ENCODE measurements at regions of chr2 and their contacts with region 1.

Region 1: DNA sequence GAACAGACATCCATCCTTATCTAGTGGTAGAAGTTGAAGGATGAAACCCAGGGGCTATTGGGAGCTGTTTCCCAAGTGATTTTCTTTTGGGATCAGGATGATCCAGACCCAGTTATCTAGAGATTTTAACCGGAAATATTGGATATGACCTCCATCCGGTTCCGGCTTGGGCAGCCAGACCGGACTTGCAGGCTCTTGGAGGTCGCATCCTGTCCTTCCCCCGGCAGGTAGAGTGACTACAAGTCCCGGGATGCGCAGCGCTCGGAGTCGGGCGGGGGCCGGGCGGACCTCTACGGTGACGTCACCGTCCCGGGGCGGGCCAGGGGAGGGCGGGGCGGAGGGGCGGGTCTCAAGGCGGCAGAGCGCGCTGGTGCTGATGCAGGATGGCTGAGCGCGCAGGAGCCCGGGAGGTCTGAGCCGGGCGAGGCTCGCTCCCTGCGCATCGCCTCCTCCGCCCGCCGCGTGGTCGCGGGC is at the start of gene KIF5C:
- DNase-seq: peak; percentile 78 to 83 (median 81)
- H3K4me3 ChIP-seq: peak within 1 kb of the TSS; percentile 54 to 70
- H3K4me3 Mint-ChIP-seq: peak within 1 kb of the TSS; percentile 90 to 97 (median 92)
- H3K27ac ChIP-seq: peak within 1 kb of the TSS; percentile 47
- H3K27ac Mint-ChIP-seq: peak within 1 kb of the TSS; percentile 78 to 97 (median 92)
- H3K4me1 ChIP-seq: peaks cover 8% of the 10 kb centered on the region
- H3K4me1 Mint-ChIP-seq: peaks cover 6 to 20% (median 15%) of the 10 kb centered on the region in 4 donors
- H3K27me3 ChIP-seq: no peaks in the 10 kb centered on the region
- H3K27me3 Mint-ChIP-seq: peaks cover 6 to 10% of the 10 kb centered on the region in 2 donors
- total RNA-seq, gene KIF5C: 21.1 to 21.3 TPM

Region 2: GRCh38 chr2:148273158-148273691 is 601.7 kb before region 1 on chr2:
- CTCF ChIA-PET with region 1: no interaction called
- POLR2A ChIA-PET with region 1: no interaction called
- intact Hi-C with region 1: no loop called
- DNase-seq: no peak
- H3K4me3 ChIP-seq: no peak overlapping the region
- H3K4me3 Mint-ChIP-seq: no peak overlapping the region
- H3K27ac ChIP-seq: no peak overlapping the region
- H3K27ac Mint-ChIP-seq: peak overlapping the region in 2 of 7 donors; percentile 2 to 10
- H3K4me1 ChIP-seq: no peaks in the 10 kb centered on the region
- H3K4me1 Mint-ChIP-seq: no peaks in the 10 kb centered on the region
- H3K27me3 ChIP-seq: no peaks in the 10 kb centered on the region
- H3K27me3 Mint-ChIP-seq: no peaks in the 10 kb centered on the region

Region 3: GRCh38 chr2:148524519-148524919 is 350.4 kb before region 1 on chr2:
- CTCF ChIA-PET with region 1: no interaction called
- POLR2A ChIA-PET with region 1: no interaction called
- intact Hi-C with region 1: loop called (anchors 1 kb)
- DNase-seq: peak; percentile 79 to 90 (median 87)
- H3K4me3 ChIP-seq: peak overlapping the region in 1 of 2 donors; percentile 26
- H3K4me3 Mint-ChIP-seq: peak overlapping the region; percentile 22 to 89 (median 72)
- H3K27ac ChIP-seq: peak overlapping the region; percentile 60
- H3K27ac Mint-ChIP-seq: peak overlapping the region; percentile 85 to 99 (median 95)
- H3K4me1 ChIP-seq: peaks cover 92% of the 10 kb centered on the region
- H3K4me1 Mint-ChIP-seq: peaks cover 74 to 90% (median 84%) of the 10 kb centered on the region in 4 donors
- H3K27me3 ChIP-seq: no peaks in the 10 kb centered on the region
- H3K27me3 Mint-ChIP-seq: no peaks in the 10 kb centered on the region

Region 4: GRCh38 chr2:148813603-148814065 is 61.3 kb before region 1 on chr2:
- CTCF ChIA-PET with region 1: no interaction called
- POLR2A ChIA-PET with region 1: no interaction called
- intact Hi-C with region 1: loop called (anchors 10 kb)
- DNase-seq: peak; percentile 54 to 85 (median 63)
- H3K4me3 ChIP-seq: no peak overlapping the region
- H3K4me3 Mint-ChIP-seq: peak overlapping the region; percentile 26 to 78 (median 64)
- H3K27ac ChIP-seq: no peak overlapping the region
- H3K27ac Mint-ChIP-seq: peak overlapping the region; percentile 17 to 80 (median 67)
- H3K4me1 ChIP-seq: peaks cover 15% of the 10 kb centered on the region
- H3K4me1 Mint-ChIP-seq: peaks cover 14 to 25% (median 19%) of the 10 kb centered on the region in 4 donors
- H3K27me3 ChIP-seq: no peaks in the 10 kb centered on the region
- H3K27me3 Mint-ChIP-seq: peaks cover under 1 to 5% of the 10 kb centered on the region in 2 donors

Region 5: DNA sequence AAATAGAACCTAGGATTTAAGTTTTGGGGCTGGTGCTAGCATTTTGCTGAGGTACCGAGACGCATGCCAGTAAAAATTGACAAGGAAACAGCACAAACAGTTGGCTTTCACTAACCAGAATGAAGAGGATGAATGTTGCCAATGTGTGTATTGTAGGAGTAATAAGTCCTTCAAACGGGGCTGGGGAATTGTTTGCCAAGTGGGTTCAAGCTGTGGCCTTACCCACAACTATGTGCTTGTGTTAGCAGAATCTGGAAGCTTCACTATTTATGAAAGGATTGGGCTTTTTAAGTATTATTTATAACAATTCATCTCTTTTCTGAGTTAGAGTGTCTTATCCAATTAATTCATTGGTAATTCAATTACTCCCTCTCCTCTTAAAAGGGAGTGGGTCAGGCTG is 14.9 kb before region 1 on chr2:
- CTCF ChIA-PET with region 1: no interaction called
- POLR2A ChIA-PET with region 1: no interaction called
- intact Hi-C with region 1: no loop called
- DNase-seq: no peak
- H3K4me3 ChIP-seq: no peak overlapping the region
- H3K4me3 Mint-ChIP-seq: no peak overlapping the region
- H3K27ac ChIP-seq: no peak overlapping the region
- H3K27ac Mint-ChIP-seq: no peak overlapping the region
- H3K4me1 ChIP-seq: no peaks in the 10 kb centered on the region
- H3K4me1 Mint-ChIP-seq: peaks cover 0 to 2% (median 0%) of the 10 kb centered on the region in 4 donors
- H3K27me3 ChIP-seq: peaks cover 4% of the 10 kb centered on the region
- H3K27me3 Mint-ChIP-seq: peaks cover 6 to 8% of the 10 kb centered on the region in 2 donors

Region 6: DNA sequence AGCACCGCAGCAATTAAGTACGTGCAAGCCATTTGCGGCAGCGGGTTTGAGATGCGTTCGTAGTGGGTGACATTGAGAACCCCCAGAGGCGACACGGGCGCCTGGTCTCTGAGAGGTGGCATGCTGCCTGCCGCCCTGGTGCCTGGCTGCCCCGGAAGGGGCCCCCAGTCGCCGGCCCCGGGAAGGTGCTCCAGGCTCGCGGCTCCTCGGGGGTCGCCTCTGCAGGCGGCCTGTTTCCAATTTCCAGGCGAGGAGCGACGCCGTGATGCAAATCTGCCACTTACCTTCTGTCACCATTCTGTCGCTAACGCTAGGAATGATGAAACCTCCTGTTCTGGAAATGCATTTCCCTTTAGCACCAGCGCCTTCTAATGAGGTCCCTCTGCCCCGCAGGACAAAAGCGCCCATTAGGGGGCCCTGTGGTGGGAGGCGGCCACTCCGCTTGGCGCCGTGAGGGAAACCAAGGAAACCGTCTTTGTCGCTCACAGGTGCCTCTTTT is 13.1 kb after region 1 on chr2:
- CTCF ChIA-PET with region 1: no interaction called
- POLR2A ChIA-PET with region 1: no interaction called
- intact Hi-C with region 1: loop called (anchors 1 kb)
- DNase-seq: peak in 2 of 5 donors; percentile 6 to 8
- H3K4me3 ChIP-seq: peak overlapping the region in 1 of 2 donors; percentile 17
- H3K4me3 Mint-ChIP-seq: peak overlapping the region; percentile 83 to 90 (median 86)
- H3K27ac ChIP-seq: no peak overlapping the region
- H3K27ac Mint-ChIP-seq: peak overlapping the region in 4 of 7 donors; percentile 4 to 77 (median 14)
- H3K4me1 ChIP-seq: peaks cover 16% of the 10 kb centered on the region
- H3K4me1 Mint-ChIP-seq: peaks cover 6 to 17% (median 10%) of the 10 kb centered on the region in 4 donors
- H3K27me3 ChIP-seq: peaks cover 4% of the 10 kb centered on the region
- H3K27me3 Mint-ChIP-seq: peaks cover 2 to 8% of the 10 kb centered on the region in 2 donors

Region 7: GRCh38 chr2:148926291-148926961 is 51.5 kb after region 1 on chr2:
- CTCF ChIA-PET with region 1: interaction called, 5 read pairs
- POLR2A ChIA-PET with region 1: interaction called, 3 read pairs
- intact Hi-C with region 1: loop called (anchors 1 kb)
- DNase-seq: peak; percentile 43 to 59 (median 56)
- H3K4me3 ChIP-seq: peak overlapping the region in 1 of 2 donors; percentile 39
- H3K4me3 Mint-ChIP-seq: peak overlapping the region; percentile 84 to 95 (median 88)
- H3K27ac ChIP-seq: peak overlapping the region; percentile 25
- H3K27ac Mint-ChIP-seq: peak overlapping the region; percentile 72 to 94 (median 93)
- H3K4me1 ChIP-seq: peaks cover 20% of the 10 kb centered on the region
- H3K4me1 Mint-ChIP-seq: peaks cover 16 to 30% (median 21%) of the 10 kb centered on the region in 4 donors
- H3K27me3 ChIP-seq: no peaks in the 10 kb centered on the region
- H3K27me3 Mint-ChIP-seq: no peaks in the 10 kb centered on the region

Region 8: DNA sequence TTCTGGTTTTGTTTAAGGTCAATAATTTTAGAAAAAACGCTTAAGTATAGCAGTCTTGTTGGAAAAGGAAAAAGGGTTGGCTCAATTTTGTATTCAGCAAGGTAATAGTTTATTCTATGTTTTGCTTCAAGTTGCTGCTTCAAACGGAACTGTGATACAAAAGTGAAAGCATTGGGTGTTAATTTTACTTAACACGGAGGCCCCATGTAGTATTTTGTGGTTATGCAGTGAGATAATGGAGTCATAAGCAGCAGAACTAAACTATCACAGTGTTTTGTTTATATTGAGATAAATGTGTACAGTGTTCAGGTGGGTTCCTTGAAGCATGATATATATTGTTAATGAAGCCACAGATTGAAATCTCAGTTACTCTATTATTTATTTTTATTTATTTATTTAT is 96.6 kb after region 1 on chr2:
- CTCF ChIA-PET with region 1: no interaction called
- POLR2A ChIA-PET with region 1: no interaction called
- intact Hi-C with region 1: no loop called
- DNase-seq: no peak
- H3K4me3 ChIP-seq: no peak overlapping the region
- H3K4me3 Mint-ChIP-seq: no peak overlapping the region
- H3K27ac ChIP-seq: no peak overlapping the region
- H3K27ac Mint-ChIP-seq: peak overlapping the region in 1 of 7 donors; percentile 58
- H3K4me1 ChIP-seq: no peaks in the 10 kb centered on the region
- H3K4me1 Mint-ChIP-seq: peaks cover 8 to 16% (median 9%) of the 10 kb centered on the region in 4 donors
- H3K27me3 ChIP-seq: no peaks in the 10 kb centered on the region
- H3K27me3 Mint-ChIP-seq: no peaks in the 10 kb centered on the region